Ovary (tissue), 10 donors: ENCODE measurements at regions of chr7 and their contacts with region 1.

Region 1: DNA sequence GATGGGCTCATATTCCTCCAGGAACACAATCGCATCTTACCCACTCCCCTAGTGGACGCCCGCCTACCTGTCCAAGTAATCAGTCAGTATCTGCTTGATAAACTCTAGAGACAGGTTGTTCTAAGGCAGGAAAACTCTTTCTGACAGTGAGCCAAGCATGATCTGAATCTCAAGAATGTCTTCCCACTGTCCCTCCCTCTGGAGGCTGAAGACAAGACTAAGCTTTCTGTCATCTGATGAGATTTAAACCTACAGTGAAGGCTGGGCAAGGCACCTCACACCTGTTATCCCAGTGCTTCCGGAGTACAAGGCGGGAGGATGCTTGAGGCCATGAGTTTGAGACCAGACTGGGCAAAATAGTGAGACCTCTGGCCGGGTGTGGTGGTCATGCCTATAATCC is 586.6 kb downstream of the GALNT17 start:
- DNase-seq: no peak
- H3K4me3 ChIP-seq: no peak overlapping the region
- H3K27ac ChIP-seq: no peak overlapping the region
- H3K4me1 ChIP-seq: no peaks in the 10 kb centered on the region
- H3K27me3 ChIP-seq: no peaks in the 10 kb centered on the region
- CTCF ChIP-seq: no peak
- EP300 ChIP-seq: no peak
- POLR2A ChIP-seq: no peak

Region 2: DNA sequence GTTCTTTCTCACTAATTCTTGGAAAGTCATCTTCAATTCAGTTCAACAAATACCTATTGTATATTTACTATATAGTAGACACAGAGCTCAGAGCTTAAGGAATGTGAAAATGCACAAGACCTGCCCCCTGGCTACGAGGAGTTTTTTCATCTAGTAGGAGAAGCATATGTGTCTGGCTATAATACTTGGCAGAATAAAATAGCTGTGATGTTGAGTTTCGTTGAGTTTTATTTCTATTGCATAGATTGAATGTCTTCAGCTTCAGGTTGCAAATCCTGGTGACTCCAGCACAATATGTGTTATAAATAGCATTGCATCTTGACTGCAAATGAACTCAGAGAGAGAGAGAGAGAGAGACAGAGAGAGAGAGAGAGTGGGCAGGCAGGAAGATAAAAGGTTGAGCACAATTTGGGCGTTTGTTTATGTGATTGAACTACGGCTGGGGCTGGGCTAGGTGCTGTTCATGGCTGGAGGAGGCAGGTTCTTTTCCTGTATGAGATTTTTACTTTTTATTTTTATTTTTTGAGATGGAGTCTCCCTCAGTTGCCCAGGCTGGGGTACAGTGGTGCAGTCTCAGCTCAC is 357.0 kb before region 1 on chr7:
- intact Hi-C with region 1: loop called in 1 of 4 experiments (anchors 2 kb)
- DNase-seq: no peak
- H3K4me3 ChIP-seq: no peak overlapping the region
- H3K27ac ChIP-seq: no peak overlapping the region
- H3K4me1 ChIP-seq: no peaks in the 10 kb centered on the region
- H3K27me3 ChIP-seq: no peaks in the 10 kb centered on the region
- CTCF ChIP-seq: no peak
- EP300 ChIP-seq: no peak
- POLR2A ChIP-seq: no peak